Left colon (tissue), 2 donors: ENCODE measurements at regions of chr6 and their contacts with region 1.

Region 1: DNA sequence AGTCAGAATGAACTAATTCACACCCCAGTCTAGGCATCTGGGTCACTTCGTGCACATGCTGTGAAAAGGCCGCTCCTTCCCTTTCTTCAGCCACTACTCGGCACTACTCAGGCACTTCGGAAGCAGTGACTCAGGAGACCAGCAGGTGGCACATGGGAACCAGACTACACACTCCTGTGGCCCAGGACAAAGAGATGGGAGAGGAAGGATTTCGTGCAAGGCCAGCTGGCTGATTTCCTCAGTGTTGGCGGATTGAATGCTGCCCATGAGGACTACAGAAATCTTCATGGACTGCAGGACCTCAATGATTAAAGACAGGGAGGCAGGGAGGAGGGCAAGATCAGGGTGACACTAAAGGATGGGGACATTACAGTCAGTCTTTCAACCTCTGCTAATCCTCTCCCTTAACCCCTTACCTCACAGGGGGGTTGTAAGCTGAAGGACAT is 117.8 kb upstream of the SPACA1 start:
- DNase-seq: peak; percentile 77 to 84
- ATAC-seq: peak; percentile 100

Region 2: GRCh38 chr6:88238065-88238464 is 308.2 kb after region 1 on chr6:
- intact Hi-C with region 1: loop called in 1 of 2 experiments (anchors 10 kb)
- DNase-seq: peak in 1 of 2 donors; percentile 8
- ATAC-seq: peak; percentile 81

Region 3: DNA sequence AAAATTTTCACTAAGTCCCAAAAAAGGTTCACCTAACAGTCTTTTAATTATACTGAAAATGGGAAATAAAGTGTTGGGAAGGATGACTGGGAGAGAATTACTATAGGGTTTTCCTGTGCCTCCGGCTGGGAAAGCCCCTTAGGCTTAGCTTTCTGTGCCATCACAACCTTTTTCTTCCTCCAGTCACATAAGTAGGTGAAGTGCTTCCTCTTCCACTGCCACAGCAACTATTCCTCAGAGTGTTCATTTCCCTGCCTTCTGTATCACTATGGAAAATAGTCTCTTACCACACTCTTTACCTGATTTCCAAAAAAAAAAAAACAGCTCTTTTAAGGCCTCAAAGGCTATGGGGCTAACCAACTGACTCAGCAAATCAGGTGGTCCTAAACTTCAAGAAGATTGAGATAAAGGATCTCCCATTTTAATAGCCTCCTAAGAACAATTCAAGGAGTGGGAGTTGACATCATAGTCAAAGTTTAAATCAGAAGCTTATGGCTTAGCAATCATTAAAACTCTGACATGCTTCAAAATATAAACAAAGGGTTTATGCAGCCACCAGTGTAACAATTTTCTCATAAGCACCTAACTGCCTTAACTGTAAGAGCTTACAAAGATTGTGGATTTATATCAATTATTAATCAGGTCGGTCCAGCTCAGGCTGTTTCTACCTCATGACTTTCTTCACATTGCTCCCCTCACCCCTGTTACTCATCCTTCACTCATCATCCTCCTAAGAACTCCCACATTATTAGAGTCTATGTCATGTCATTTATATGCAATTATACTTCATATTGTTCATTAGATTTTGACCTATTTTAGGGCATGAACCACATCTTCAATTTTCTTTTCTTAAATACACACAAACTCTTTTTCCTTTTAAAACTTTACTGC is 938.2 kb after region 1 on chr6:
- intact Hi-C with region 1: loop called in 1 of 2 experiments (anchors 10 kb)
- DNase-seq: no peak
- ATAC-seq: no peak